ENCODE measurements at regions of chr17 and their contacts with region 1.

Region 1: DNA sequence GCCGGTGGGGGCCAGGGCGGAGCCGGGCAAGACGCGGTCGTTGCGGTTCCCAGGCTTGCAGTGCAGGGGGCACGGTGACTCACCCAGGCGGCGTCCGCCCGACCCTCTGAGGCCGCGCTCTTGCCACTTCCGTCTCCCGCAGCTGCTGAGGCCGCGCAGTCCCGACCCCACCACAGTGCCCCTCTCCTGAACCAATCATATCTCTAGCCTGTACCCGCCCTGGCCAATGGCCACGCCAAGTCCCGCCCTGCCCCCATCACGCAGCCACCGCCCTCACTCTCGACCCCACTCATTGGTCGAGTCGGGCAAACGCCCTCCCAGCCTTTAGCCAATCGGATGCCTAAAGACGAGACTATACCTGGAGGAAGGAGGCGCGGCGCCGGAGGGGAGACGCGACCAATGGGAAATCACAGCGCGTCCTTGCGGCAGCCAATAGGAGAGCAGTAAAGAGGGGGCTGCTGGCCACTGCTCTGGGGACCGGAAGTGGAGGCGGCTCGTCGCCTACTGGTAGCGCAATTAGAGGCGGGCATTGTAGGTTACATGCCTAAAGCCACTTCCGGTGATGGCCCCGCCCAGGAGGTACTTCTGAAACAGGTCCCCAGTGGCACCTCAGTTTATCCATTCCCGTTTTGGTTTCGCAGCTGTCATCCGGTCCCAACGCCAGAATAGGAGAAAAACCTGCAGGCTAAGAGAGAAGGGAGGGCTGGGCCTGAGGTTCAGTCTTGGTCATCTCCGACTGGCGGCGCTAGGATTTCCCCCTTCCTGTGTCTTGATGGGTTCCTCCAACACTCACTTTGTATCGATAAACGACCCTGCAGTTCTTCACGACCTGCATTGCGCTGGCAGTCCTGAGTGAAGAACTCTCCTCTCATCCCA is 3.5 kb upstream of the MTMR4 start:
- DNase-seq: peak; percentile 100
- H3K4me3 ChIP-seq: peak overlapping the region; percentile 70 to 85 (median 81)
- H3K27ac ChIP-seq: peak overlapping the region; percentile 95 to 98 (median 96)
- H3K4me1 ChIP-seq: peaks cover 0 to 46% (median 39%) of the 10 kb centered on the region in 4 donors
- H3K27me3 ChIP-seq: no peaks in the 10 kb centered on the region
- CTCF ChIP-seq: no peak
- EP300 ChIP-seq: peak in 1 of 4 donors; percentile 50
- POLR2A ChIP-seq: peak; percentile 41 to 71

Region 2: GRCh38 chr17:58352014-58352842 is 165.7 kb before region 1 on chr17 and contains the start of gene SUPT4H1:
- intact Hi-C with region 1: loop called (anchors 10 kb)
- DNase-seq: peak; percentile 93
- H3K4me3 ChIP-seq: peak within 1 kb of the TSS; percentile 58 to 94 (median 92)
- H3K27ac ChIP-seq: peak within 1 kb of the TSS; percentile 95 to 98 (median 96)
- H3K4me1 ChIP-seq: peaks cover 0 to 22% (median 14%) of the 10 kb centered on the region in 4 donors
- H3K27me3 ChIP-seq: no peaks in the 10 kb centered on the region
- CTCF ChIP-seq: no peak
- EP300 ChIP-seq: peak in 1 of 4 donors; percentile 36
- POLR2A ChIP-seq: peak; percentile 33 to 66
- total RNA-seq, gene SUPT4H1: 50.5 to 65.3 (median 57.4) TPM

Region 3: GRCh38 chr17:58631523-58632323 is 113.8 kb after region 1 on chr17:
- intact Hi-C with region 1: loop called (anchors 2 kb)
- DNase-seq: peak; percentile 97
- H3K4me3 ChIP-seq: peak overlapping the region; percentile 30 to 49 (median 40)
- H3K27ac ChIP-seq: peak overlapping the region; percentile 73 to 88 (median 84)
- H3K4me1 ChIP-seq: peaks cover 0 to 11% (median 5%) of the 10 kb centered on the region in 4 donors
- H3K27me3 ChIP-seq: no peaks in the 10 kb centered on the region
- CTCF ChIP-seq: peak in 3 of 4 experiments; percentile 7 to 13 (median 11)
- EP300 ChIP-seq: peak in 2 of 4 donors; percentile 45 to 69
- POLR2A ChIP-seq: peak; percentile 92 to 96

Region 4: GRCh38 chr17:58692239-58693055 is 174.5 kb after region 1 on chr17 and contains the start of gene RAD51C:
- intact Hi-C with region 1: loop called (anchors 5 kb)
- DNase-seq: peak; percentile 91
- H3K4me3 ChIP-seq: peak within 1 kb of the TSS; percentile 58 to 69 (median 66)
- H3K27ac ChIP-seq: peak within 1 kb of the TSS; percentile 82 to 91 (median 84)
- H3K4me1 ChIP-seq: peaks cover 0 to 15% (median 13%) of the 10 kb centered on the region in 4 donors
- H3K27me3 ChIP-seq: no peaks in the 10 kb centered on the region
- CTCF ChIP-seq: no peak
- EP300 ChIP-seq: peak in 1 of 4 donors; percentile 5
- POLR2A ChIP-seq: peak; percentile 62 to 74
- total RNA-seq, gene RAD51C: 16.8 to 25.2 (median 19.0) TPM

Region 5: GRCh38 chr17:58747674-58748073 is 229.7 kb after region 1 on chr17:
- intact Hi-C with region 1: no loop called
- DNase-seq: no peak
- H3K4me3 ChIP-seq: no peak overlapping the region
- H3K27ac ChIP-seq: no peak overlapping the region
- H3K4me1 ChIP-seq: no peaks in the 10 kb centered on the region
- H3K27me3 ChIP-seq: no peaks in the 10 kb centered on the region
- CTCF ChIP-seq: no peak
- EP300 ChIP-seq: no peak
- POLR2A ChIP-seq: no peak

Region 6: GRCh38 chr17:59106463-59107305 is 588.7 kb after region 1 on chr17 and contains the start of gene TRIM37:
- intact Hi-C with region 1: loop called (anchors 5 kb)
- DNase-seq: peak; percentile 99
- H3K4me3 ChIP-seq: peak within 1 kb of the TSS; percentile 74 to 100 (median 95)
- H3K27ac ChIP-seq: peak within 1 kb of the TSS; percentile 94 to 98 (median 97)
- H3K4me1 ChIP-seq: peaks cover 0 to 33% (median 24%) of the 10 kb centered on the region in 4 donors
- H3K27me3 ChIP-seq: no peaks in the 10 kb centered on the region
- CTCF ChIP-seq: no peak
- EP300 ChIP-seq: no peak
- POLR2A ChIP-seq: peak; percentile 58 to 75
- total RNA-seq, gene TRIM37: 20.2 to 37.8 (median 25.7) TPM

Region 7: DNA sequence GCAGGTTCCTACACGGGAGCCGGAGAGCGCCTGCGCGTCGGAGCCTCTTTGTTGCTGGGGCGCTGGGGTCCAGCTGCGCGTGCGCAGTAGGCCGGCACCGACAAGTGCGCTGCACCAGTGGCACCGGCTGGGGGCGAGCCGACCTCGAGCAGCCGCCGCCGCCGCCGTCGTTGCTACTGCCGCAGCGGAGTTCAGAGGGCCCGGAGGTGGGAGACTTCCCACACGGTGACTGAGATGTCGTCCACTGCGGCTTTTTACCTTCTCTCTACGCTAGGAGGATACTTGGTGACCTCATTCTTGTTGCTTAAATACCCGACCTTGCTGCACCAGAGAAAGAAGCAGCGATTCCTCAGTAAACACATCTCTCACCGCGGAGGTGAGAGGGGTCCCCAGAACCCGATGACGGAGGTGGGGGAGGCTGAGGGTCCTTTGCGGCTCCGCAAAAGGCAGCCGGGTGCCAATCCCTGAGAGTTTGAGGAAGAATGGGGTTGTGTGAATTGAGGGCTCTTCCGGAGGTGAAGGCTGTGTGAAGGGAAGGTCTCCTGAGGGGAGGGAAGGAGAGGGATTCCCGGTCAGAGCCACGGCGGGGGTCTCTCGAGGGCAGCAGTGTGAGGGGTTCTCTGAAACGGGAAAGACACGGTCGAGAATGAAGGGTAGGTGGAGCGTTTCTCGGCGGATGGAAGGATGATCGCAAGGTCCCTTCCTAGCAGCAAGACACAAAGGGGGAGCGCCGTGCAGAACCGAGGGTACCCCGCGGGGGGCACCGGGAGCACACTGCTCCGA is 702.6 kb after region 1 on chr17 and contains the start of gene GDPD1:
- intact Hi-C with region 1: loop called (anchors 10 kb)
- DNase-seq: peak; percentile 98
- H3K4me3 ChIP-seq: peak within 1 kb of the TSS; percentile 56 to 87 (median 80)
- H3K27ac ChIP-seq: peak within 1 kb of the TSS; percentile 78 to 82 (median 80)
- H3K4me1 ChIP-seq: peaks cover 0 to 6% (median 2%) of the 10 kb centered on the region in 4 donors
- H3K27me3 ChIP-seq: no peaks in the 10 kb centered on the region
- CTCF ChIP-seq: peak; percentile 29 to 64 (median 50)
- EP300 ChIP-seq: no peak
- POLR2A ChIP-seq: no peak
- total RNA-seq, gene GDPD1: 2.5 to 4.3 (median 3.2) TPM